Mammary epithelial cell (primary cell): ENCODE measurements at regions of chr11 and their contacts with region 1.

Region 1: GRCh38 chr11:93623179-93623578 is 38.3 kb upstream of the CEP295 start:
- DNase-seq: no peak
- H3K4me3 ChIP-seq: no peak overlapping the region
- H3K27ac ChIP-seq: no peak overlapping the region
- H3K4me1 ChIP-seq: no peaks in the 10 kb centered on the region
- H3K27me3 ChIP-seq: no peaks in the 10 kb centered on the region
- CTCF ChIP-seq: no peak

Region 2: DNA sequence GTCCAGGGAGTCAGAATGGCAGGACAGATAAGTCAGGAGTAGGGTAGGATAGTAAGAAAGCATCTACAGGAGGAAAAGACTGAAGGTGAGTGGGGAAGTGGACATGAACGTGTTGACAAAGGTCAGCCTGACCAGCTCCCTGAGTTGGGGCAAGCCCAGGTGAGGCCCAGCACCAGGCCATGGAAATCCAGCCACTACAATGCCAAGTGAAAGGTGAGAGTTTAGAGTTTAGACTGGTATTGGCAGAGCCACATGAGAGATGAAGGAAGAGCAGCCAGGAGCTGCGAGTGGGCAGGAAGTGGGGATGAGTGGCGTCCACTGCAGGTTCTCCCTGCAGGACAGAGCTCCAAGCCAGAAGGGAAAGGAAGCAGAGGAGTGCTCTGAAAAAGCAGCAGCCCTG is 63.5 kb before region 1 on chr11:
- CTCF ChIA-PET with region 1: no interaction called
- dilution Hi-C with region 1: loop called (anchors 5 kb)
- in situ Hi-C with region 1: no loop called
- intact Hi-C with region 1: loop called (anchors 10 kb)
- DNase-seq: no peak
- H3K4me3 ChIP-seq: no peak overlapping the region
- H3K27ac ChIP-seq: no peak overlapping the region
- H3K4me1 ChIP-seq: no peaks in the 10 kb centered on the region
- H3K27me3 ChIP-seq: peaks cover 8% of the 10 kb centered on the region
- CTCF ChIP-seq: no peak

Region 3: DNA sequence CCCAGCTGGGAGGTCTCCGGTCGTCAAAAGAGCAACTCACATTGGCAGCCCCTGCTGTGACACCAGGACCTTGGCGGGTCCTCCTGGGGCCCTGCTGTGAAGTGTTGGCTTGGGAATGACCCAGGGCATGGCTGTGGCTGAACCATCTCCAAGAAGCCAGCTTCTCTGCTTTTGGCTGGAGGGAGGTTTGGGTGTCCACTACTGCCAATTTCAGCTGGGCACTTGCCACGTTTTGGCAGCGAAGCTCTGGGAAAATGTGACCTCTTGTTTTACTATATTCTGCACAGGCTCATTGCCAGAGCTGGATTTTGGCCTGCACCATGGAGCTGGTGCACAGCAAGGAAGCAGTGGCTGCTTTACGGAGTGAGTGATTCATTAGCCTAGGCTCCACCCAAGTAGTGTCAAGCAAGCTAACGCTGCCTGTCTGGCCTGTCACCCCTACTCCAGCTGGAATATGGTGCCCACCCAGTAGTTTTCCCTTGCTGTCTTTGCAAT is 55.7 kb before region 1 on chr11:
- CTCF ChIA-PET with region 1: no interaction called
- dilution Hi-C with region 1: no loop called
- in situ Hi-C with region 1: no loop called
- intact Hi-C with region 1: loop called (anchors 10 kb)
- DNase-seq: no peak
- H3K4me3 ChIP-seq: no peak overlapping the region
- H3K27ac ChIP-seq: no peak overlapping the region
- H3K4me1 ChIP-seq: no peaks in the 10 kb centered on the region
- H3K27me3 ChIP-seq: no peaks in the 10 kb centered on the region
- CTCF ChIP-seq: no peak

Region 4: GRCh38 chr11:93662177-93662575 is 39.0 kb after region 1 on chr11:
- CTCF ChIA-PET with region 1: no interaction called
- dilution Hi-C with region 1: no loop called
- in situ Hi-C with region 1: no loop called
- intact Hi-C with region 1: no loop called
- DNase-seq: no peak
- H3K4me3 ChIP-seq: peak overlapping the region; percentile 82 to 91 (median 85)
- H3K27ac ChIP-seq: peak overlapping the region; percentile 87
- H3K4me1 ChIP-seq: peaks cover 8% of the 10 kb centered on the region
- H3K27me3 ChIP-seq: no peaks in the 10 kb centered on the region
- CTCF ChIP-seq: no peak